ENCODE measurements at regions of chr6 and their contacts with region 1.

Region 1: GRCh38 chr6:104771258-104771832 is 88.4 kb downstream of the HACE1 start:
- DNase-seq: no peak
- ATAC-seq: peak in 1 of 4 donors; percentile 65
- H3K4me3 ChIP-seq: no peak overlapping the region
- H3K27ac ChIP-seq: no peak overlapping the region
- H3K4me1 ChIP-seq: no peaks in the 10 kb centered on the region
- H3K27me3 ChIP-seq: no peaks in the 10 kb centered on the region
- CTCF ChIP-seq: peak; percentile 29 to 70 (median 55)
- POLR2A ChIP-seq: no peak

Region 2: DNA sequence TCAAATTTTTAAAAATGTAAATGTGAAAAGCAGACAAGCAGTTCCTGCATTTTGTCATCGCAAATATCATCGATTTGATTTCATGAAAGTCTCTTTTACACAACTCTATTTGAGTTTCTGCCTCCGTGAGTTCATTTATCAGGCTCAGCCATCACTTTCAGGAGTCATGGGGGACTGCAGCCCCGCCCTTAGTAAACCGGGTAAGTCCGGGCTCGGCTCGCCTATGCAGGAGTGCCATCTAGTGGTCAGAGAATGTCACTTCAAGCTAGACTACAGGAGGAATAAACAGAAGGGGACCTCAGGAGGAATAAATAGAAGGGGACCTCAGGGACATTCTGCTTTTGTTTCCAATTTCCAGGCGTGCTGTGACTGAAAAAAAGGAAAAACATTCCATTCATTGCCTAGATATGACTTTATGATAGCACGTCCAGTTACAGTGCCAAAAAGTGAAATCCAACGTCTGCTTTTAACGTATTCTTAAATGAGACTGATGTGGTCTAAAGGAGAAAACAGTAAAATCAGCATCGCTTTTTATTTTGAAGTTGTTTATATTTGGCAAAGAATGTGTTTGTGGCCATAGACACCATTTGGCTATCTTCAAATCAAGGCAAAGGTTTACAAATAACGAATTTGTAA is 245.6 kb before region 1 on chr6:
- intact Hi-C with region 1: loop called in 4 of 10 experiments (anchors 5 to 10 kb)
- DNase-seq: peak; percentile 55 to 76 (median 64)
- ATAC-seq: peak in 3 of 4 donors; percentile 90 to 95 (median 91)
- H3K4me3 ChIP-seq: peak overlapping the region in 9 of 12 donors; percentile 26 to 46 (median 31)
- H3K27ac ChIP-seq: no peak overlapping the region
- H3K4me1 ChIP-seq: peaks cover 0 to 22% (median 1%) of the 10 kb centered on the region in 12 donors
- H3K27me3 ChIP-seq: no peaks in the 10 kb centered on the region
- CTCF ChIP-seq: peak; percentile 84 to 96 (median 92)
- POLR2A ChIP-seq: no peak

Region 3: GRCh38 chr6:104537180-104537579 is 234.2 kb before region 1 on chr6:
- intact Hi-C with region 1: loop called in 1 of 10 experiments (anchors 10 kb)
- DNase-seq: no peak
- ATAC-seq: no peak
- H3K4me3 ChIP-seq: no peak overlapping the region
- H3K27ac ChIP-seq: no peak overlapping the region
- H3K4me1 ChIP-seq: peaks cover 0 to 12% (median 0%) of the 10 kb centered on the region in 12 donors
- H3K27me3 ChIP-seq: no peaks in the 10 kb centered on the region
- CTCF ChIP-seq: no peak
- POLR2A ChIP-seq: no peak

Region 4: GRCh38 chr6:104639668-104640067 is 131.7 kb before region 1 on chr6:
- intact Hi-C with region 1: loop called in 1 of 10 experiments (anchors 5 kb)
- DNase-seq: no peak
- ATAC-seq: peak; percentile 29 to 66 (median 50)
- H3K4me3 ChIP-seq: no peak overlapping the region
- H3K27ac ChIP-seq: peak overlapping the region in 9 of 12 donors; percentile 15 to 78 (median 52)
- H3K4me1 ChIP-seq: peaks cover 0 to 34% (median 11%) of the 10 kb centered on the region in 12 donors
- H3K27me3 ChIP-seq: no peaks in the 10 kb centered on the region
- CTCF ChIP-seq: no peak
- POLR2A ChIP-seq: no peak

Region 5: DNA sequence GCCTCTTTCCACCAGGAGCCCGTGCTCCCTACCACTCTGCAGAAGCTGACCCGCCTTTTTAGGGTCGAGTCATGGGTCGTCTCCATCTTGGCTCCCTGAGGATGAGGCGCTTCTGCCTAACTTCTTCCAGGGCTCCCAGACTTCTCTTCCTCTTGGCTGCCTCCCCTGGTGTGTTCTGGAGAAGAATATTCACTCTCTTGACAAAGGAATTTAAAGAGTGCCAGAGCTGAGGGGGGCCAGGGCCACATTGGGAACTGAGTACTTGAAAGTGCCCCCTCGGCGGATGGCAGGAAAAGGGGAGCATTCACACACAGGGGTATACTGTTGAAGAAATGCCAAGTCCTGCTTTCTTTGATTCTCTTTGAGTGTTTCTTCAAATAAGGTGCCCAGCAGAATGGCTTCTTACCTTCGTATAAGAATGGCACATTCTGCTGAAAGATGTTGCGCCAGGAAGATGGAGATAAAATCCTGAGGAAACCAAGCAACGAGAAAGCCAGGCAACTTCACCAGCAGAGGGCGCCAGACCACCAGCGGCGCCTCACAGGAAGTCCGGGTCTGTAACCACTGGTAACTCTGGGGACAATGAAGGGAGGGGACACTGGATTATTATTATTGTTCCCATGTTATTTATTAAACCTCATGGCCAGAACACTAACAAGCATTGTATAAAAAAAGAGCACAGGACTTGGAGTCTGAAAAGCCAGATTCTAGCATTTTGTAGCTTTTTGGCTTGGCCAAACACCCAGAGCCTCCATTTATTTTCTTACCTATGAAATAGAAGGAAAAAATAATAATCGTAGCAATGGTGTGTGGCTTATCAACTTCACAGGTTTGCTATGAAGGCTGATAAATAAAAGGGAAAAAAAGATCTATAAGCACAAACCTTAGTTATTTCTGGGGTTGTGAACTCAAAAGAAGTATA is 88.4 kb before region 1 on chr6:
- intact Hi-C with region 1: loop called in 7 of 10 experiments (anchors 2 to 5 kb)
- DNase-seq: peak; percentile 38 to 81 (median 41)
- ATAC-seq: peak in 2 of 4 donors; percentile 58 to 61
- H3K4me3 ChIP-seq: no peak overlapping the region
- H3K27ac ChIP-seq: no peak overlapping the region
- H3K4me1 ChIP-seq: peaks cover 0 to 8% (median 0%) of the 10 kb centered on the region in 12 donors
- H3K27me3 ChIP-seq: no peaks in the 10 kb centered on the region
- CTCF ChIP-seq: peak; percentile 46 to 88 (median 70)
- POLR2A ChIP-seq: no peak

Region 6: DNA sequence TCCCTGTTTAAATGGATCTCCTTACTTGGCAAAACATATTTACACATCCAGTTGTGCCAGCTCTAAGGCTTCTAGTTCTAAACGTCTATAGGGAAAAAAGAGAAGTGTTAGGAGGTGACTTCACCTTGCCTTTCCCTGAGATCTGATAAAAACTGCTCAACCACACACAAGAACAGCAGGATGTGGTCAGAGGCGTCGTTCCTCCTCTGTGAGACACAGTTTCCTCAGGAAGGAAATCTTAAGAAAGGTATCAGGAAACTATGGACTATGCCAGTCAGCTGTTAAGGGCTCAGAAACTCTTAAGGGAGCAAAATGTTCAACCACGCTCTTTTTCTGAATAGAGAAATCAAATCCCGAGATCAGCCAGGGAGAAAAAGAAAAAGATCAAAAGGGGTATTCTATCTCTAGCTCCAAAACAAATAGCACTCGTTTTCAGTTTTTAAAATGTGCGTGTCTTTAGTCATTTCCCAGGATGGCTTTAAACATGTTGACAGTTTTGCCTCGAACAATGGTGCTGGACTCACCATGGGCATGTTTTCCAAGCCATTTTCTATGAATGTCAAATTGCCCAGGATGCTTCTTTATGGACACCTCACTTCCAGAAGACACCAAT is 66.1 kb before region 1 on chr6:
- intact Hi-C with region 1: loop called in 1 of 10 experiments (anchors 10 kb)
- DNase-seq: peak in 4 of 5 donors; percentile 20 to 53 (median 28)
- ATAC-seq: peak in 3 of 4 donors; percentile 77 to 96 (median 90)
- H3K4me3 ChIP-seq: peak overlapping the region in 1 of 12 donors; percentile 8
- H3K27ac ChIP-seq: peak overlapping the region; percentile 35 to 75 (median 57)
- H3K4me1 ChIP-seq: peaks cover 0 to 23% (median 0%) of the 10 kb centered on the region in 12 donors
- H3K27me3 ChIP-seq: no peaks in the 10 kb centered on the region
- CTCF ChIP-seq: no peak
- POLR2A ChIP-seq: no peak

Region 7: GRCh38 chr6:104843200-104843599 is 71.9 kb after region 1 on chr6:
- intact Hi-C with region 1: no loop called
- DNase-seq: no peak
- ATAC-seq: no peak
- H3K4me3 ChIP-seq: no peak overlapping the region
- H3K27ac ChIP-seq: no peak overlapping the region
- H3K4me1 ChIP-seq: peaks cover 0 to 3% (median 0%) of the 10 kb centered on the region in 12 donors
- H3K27me3 ChIP-seq: no peaks in the 10 kb centered on the region
- CTCF ChIP-seq: no peak
- POLR2A ChIP-seq: no peak